ENCODE measurements at regions of chr4 and their contacts with region 1.

Region 1: DNA sequence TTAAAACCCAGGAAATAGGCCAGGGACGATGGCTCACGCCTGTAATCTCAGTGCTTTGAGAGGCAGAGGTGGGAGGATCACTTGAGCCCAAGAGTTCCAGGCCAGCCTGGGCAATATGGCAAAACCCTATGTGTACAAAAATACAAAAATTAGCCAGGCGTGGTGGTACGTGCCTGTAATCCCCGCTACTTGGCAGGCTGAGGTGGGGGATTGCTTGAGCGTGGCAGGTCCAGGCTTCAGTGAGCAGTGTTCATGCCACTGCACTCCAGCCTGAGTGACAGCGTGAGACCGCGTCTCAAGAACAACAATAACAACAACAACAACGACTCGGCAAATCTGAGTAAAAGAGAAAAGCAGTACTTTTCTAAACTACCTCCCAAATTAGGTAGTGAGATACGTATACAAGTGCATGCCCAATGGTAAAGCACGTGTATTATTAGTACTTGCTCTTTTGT is 13.0 kb upstream of the NDUFC1 start:
- DNase-seq: no peak
- ATAC-seq: peak; percentile 81
- H3K4me3 Mint-ChIP-seq: peak overlapping the region; percentile 71
- H3K27ac Mint-ChIP-seq: peak overlapping the region; percentile 86
- H3K4me1 Mint-ChIP-seq: peaks cover 77% of the 10 kb centered on the region
- H3K27me3 Mint-ChIP-seq: no peaks in the 10 kb centered on the region
- CTCF ChIP-seq: no peak

Region 2: DNA sequence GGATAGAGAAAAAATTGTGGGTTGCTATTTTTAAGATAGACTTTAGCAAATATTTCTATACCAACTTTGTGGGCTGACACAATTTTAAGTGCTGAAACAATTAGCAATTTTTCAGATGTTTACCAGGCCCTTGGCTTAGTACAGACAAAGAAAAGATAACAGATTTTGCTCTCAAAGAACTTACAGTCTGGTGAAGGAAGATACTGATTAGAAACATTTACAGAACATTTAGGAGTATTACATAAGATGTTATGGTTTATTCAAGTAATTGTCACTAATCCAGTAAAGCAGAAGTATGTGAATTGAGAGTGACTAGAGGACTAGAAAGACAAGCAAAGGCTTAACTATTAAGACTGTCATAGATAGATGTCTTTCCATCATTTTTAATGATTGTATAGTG is 22.4 kb after region 1 on chr4:
- CTCF ChIA-PET with region 1: interaction called, 3 read pairs
- POLR2A ChIA-PET with region 1: no interaction called
- intact Hi-C with region 1: loop called (anchors 2 kb)
- DNase-seq: no peak
- ATAC-seq: no peak
- H3K4me3 Mint-ChIP-seq: no peak overlapping the region
- H3K27ac Mint-ChIP-seq: no peak overlapping the region
- H3K4me1 Mint-ChIP-seq: peaks cover 16% of the 10 kb centered on the region
- H3K27me3 Mint-ChIP-seq: no peaks in the 10 kb centered on the region
- CTCF ChIP-seq: no peak

Region 3: DNA sequence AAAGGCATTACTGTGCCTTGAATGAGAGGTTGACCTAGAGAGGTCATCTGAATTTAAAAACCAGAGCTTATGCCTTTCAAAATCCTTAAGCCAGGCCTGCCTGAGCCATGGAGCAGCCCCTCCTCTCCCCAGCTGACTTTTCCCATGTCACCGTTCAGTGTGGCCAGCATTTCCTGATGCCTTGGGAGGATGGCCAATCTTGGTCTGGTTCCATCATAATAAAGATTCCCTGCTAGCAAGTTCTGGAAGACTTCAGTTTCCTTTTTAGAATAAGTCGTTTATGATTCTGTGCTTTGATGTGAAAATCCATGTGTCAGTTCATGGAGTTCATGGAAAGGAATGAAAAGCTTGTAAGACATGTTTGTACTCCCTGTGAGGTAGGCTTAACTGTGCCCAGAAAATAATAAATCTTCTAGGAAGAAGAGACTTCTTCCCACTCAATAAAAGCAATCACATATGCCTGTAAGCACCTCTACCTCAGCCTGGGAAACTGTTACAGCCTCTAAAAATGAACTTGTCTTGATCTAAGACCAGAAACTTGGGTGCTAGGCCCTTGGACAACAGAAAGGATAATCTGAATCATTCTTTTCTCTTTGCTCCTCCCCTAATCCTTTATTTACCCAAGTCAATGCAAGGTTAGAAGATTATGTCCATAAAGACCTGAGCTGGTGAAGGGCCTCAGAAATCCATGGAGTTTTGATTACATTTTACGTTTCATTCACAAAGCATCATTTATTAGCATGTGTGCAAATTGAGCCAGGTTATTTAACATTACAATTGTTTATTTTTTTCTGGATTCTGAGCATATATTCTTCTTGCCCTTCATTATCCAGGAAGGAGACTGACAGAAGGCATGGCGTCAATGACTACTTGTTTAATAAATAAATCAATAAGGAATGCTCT is 1524.9 kb after region 1 on chr4:
- CTCF ChIA-PET with region 1: no interaction called
- POLR2A ChIA-PET with region 1: interaction called, 10 read pairs
- intact Hi-C with region 1: no loop called
- DNase-seq: no peak
- ATAC-seq: no peak
- H3K4me3 Mint-ChIP-seq: no peak overlapping the region
- H3K27ac Mint-ChIP-seq: no peak overlapping the region
- H3K4me1 Mint-ChIP-seq: peaks cover 32% of the 10 kb centered on the region
- H3K27me3 Mint-ChIP-seq: no peaks in the 10 kb centered on the region
- CTCF ChIP-seq: no peak

Measured in activated B cell treated with CpG ODN at 0.5 μM for 24 hours (primary cell).